Gastrocnemius medialis (tissue), 4 donors: ENCODE measurements at regions of chr15 and their contacts with region 1.

Region 1: GRCh38 chr15:25481207-25481859 is 42.5 kb upstream of the UBE3A start:
- DNase-seq: no peak
- ATAC-seq: peak in 1 of 2 donors; percentile 30
- H3K4me3 ChIP-seq: peak overlapping the region; percentile 19 to 43 (median 20)
- H3K27ac ChIP-seq: no peak overlapping the region
- H3K4me1 ChIP-seq: peaks cover 3% of the 10 kb centered on the region in 2 donors
- H3K27me3 ChIP-seq: no peaks in the 10 kb centered on the region
- CTCF ChIP-seq: no peak
- POLR2A ChIP-seq: no peak

Region 2: DNA sequence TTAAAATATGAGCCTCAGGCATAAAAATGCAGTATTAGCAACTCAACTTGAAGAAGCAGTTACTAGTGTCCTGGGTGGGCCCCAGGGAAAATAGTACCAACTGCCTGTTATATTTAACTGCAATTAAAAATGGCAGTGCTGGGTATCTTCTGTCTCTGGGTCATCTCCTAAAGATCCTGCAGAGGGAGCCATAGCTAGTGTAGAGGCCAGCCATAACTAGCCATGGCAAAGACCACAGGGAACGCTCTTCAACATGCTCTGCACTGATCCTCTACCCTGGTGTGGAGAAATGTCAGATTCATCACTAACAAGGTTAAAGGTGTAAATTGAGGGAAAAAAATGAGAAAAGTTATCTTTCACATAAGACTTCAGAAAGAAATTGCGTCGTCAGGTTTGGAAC is 345.2 kb before region 1 on chr15:
- in situ Hi-C with region 1: loop called in 1 of 4 experiments (anchors 25 kb)
- intact Hi-C with region 1: no loop called
- DNase-seq: no peak
- ATAC-seq: peak; percentile 64 to 73
- H3K4me3 ChIP-seq: no peak overlapping the region
- H3K27ac ChIP-seq: no peak overlapping the region
- H3K4me1 ChIP-seq: no peaks in the 10 kb centered on the region
- H3K27me3 ChIP-seq: no peaks in the 10 kb centered on the region
- CTCF ChIP-seq: peak in 4 of 5 experiments; percentile 23 to 46 (median 34)
- POLR2A ChIP-seq: no peak